Aorta (tissue), 5 donors: ENCODE measurements at regions of chr4 and their contacts with region 1.

Region 1: GRCh38 chr4:2241410-2242353 is at the starts of genes HAUS3 and POLN:
- DNase-seq: peak; percentile 99 to 100
- ATAC-seq: peak; percentile 99
- H3K4me3 ChIP-seq: peak within 1 kb of the TSS; percentile 58 to 66
- H3K27ac ChIP-seq: peak within 1 kb of the TSS in 1 of 2 donors; percentile 22
- H3K4me1 ChIP-seq: peaks cover 0 to 3% of the 10 kb centered on the region in 2 donors
- H3K27me3 ChIP-seq: no peaks in the 10 kb centered on the region
- total RNA-seq, gene HAUS3: 11.1 to 16.2 TPM
- total RNA-seq, gene POLN: 3.2 to 6.6 TPM

Region 2: DNA sequence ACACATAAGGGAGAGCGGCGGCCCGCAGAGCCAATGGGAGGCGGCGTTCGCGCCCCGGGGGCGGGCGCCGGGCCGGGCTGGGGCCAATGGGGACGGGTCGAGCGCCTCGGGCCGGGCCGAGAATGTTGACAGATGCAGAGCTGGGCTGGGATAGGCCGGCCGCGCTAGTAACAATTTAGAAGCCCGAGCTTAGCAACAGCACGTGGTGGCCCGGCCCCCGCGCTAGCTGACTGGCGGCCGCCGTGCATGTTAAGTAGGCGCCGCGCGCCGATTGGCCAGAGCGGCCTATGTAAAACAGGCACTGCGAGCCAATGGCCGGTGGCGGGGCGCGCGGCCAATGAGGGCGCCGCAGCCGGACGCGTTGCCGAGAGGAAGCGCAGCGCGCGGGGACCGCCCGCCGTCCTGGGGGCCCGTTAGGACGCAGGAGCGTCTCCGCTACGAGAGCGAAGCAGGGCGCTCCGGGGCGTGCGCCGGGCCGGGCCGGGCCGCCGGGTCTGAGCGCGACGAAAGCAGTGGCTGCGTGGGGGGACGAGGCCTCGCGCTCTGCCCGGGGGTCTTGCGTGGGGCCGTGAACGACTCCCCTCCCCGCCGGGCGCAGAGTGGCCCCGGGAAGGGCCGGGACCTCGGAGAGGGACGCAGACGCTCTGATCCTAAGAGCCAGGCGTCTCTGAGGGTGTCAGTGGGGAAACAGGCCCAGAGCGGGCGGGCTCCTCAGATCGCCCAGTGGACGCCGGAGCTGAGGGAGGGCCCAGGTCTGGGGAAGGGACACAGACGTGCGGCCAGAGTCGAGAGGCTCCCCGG is 20.7 kb after region 1 on chr4:
- intact Hi-C with region 1: loop called in 1 of 2 experiments (anchors 1 kb)
- DNase-seq: peak; percentile 100
- ATAC-seq: peak; percentile 96
- H3K4me3 ChIP-seq: peak overlapping the region; percentile 43 to 81
- H3K27ac ChIP-seq: peak overlapping the region in 1 of 2 donors; percentile 23
- H3K4me1 ChIP-seq: no peaks in the 10 kb centered on the region
- H3K27me3 ChIP-seq: no peaks in the 10 kb centered on the region

Region 3: GRCh38 chr4:2412885-2413716 is 171.4 kb after region 1 on chr4:
- intact Hi-C with region 1: loop called in 1 of 2 experiments (anchors 5 kb)
- DNase-seq: peak; percentile 93
- ATAC-seq: peak; percentile 92
- H3K4me3 ChIP-seq: no peak overlapping the region
- H3K27ac ChIP-seq: no peak overlapping the region
- H3K4me1 ChIP-seq: no peaks in the 10 kb centered on the region
- H3K27me3 ChIP-seq: no peaks in the 10 kb centered on the region